Endothelial cell of umbilical vein (primary cell): ENCODE measurements at regions of chr3 and their contacts with region 1.

Region 1: GRCh38 chr3:194592798-194593752 is 40.1 kb downstream of the TMEM44 start:
- DNase-seq: peak; percentile 62
- H3K4me3 ChIP-seq: no peak overlapping the region
- H3K27ac ChIP-seq: peak overlapping the region; percentile 54
- H3K4me1 ChIP-seq: peaks cover 12% of the 10 kb centered on the region
- H3K27me3 ChIP-seq: no peaks in the 10 kb centered on the region
- CTCF ChIP-seq: no peak
- POLR2A ChIP-seq: no peak

Region 2: DNA sequence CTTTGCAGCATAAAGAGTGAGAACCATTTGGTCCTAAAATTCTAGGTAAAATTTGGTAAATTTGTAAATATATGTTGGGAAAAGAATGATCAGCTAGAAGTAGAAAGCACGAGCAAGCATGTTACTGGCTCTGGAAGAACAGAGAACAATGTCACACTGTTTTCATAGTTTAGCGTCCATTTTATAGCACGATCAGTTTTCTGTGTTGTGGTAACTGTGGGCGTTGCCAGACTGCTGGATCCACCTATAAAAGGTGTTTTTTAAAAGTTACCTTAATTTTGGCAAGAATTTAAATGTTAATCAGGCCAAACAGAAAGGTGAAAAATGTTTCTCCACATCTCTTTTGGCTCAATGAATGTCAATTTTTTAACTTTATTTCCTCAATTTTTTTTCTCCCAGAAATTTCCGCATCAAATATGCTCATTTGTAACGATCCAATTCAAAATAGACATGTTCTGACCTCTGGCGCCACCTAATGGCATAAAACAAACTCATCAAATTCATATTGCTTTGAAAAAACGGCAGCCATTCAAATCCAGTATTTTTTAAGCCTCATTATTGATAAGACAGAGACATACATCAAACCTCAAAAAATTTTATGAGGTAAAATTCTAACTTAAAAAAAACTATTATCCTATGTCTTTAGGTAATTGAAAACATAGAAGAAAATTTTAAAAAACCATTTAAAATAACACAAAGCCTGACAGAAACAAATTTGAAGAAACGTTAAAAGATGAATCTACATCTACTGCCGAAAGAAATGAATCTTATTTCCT is 188.5 kb before region 1 on chr3:
- CTCF ChIA-PET with region 1: interaction called, 11 read pairs
- POLR2A ChIA-PET with region 1: no interaction called
- dilution Hi-C with region 1: no loop called
- intact Hi-C with region 1: loop called (anchors 5 kb)
- DNase-seq: peak; percentile 69
- H3K4me3 ChIP-seq: no peak overlapping the region
- H3K27ac ChIP-seq: no peak overlapping the region
- H3K4me1 ChIP-seq: no peaks in the 10 kb centered on the region
- H3K27me3 ChIP-seq: peaks cover 0 to 1% of the 10 kb centered on the region in 2 experiments
- CTCF ChIP-seq: peak; percentile 36 to 49
- POLR2A ChIP-seq: no peak

Region 3: GRCh38 chr3:194465920-194466570 is 127.0 kb before region 1 on chr3:
- CTCF ChIA-PET with region 1: interaction called, 210 read pairs
- POLR2A ChIA-PET with region 1: no interaction called
- dilution Hi-C with region 1: no loop called
- intact Hi-C with region 1: no loop called
- DNase-seq: peak; percentile 35
- H3K4me3 ChIP-seq: peak overlapping the region in 1 of 3 experiments; percentile 5
- H3K27ac ChIP-seq: no peak overlapping the region
- H3K4me1 ChIP-seq: peaks cover 8% of the 10 kb centered on the region
- H3K27me3 ChIP-seq: no peaks in the 10 kb centered on the region
- CTCF ChIP-seq: no peak
- POLR2A ChIP-seq: no peak

Region 4: GRCh38 chr3:194472290-194472920 is 120.7 kb before region 1 on chr3:
- CTCF ChIA-PET with region 1: interaction called, 210 read pairs
- POLR2A ChIA-PET with region 1: interaction called, 3 read pairs
- dilution Hi-C with region 1: no loop called
- intact Hi-C with region 1: loop called (anchors 1 kb)
- DNase-seq: peak; percentile 67
- H3K4me3 ChIP-seq: no peak overlapping the region
- H3K27ac ChIP-seq: no peak overlapping the region
- H3K4me1 ChIP-seq: peaks cover 3% of the 10 kb centered on the region
- H3K27me3 ChIP-seq: no peaks in the 10 kb centered on the region
- CTCF ChIP-seq: peak; percentile 80 to 85
- POLR2A ChIP-seq: no peak

Region 5: DNA sequence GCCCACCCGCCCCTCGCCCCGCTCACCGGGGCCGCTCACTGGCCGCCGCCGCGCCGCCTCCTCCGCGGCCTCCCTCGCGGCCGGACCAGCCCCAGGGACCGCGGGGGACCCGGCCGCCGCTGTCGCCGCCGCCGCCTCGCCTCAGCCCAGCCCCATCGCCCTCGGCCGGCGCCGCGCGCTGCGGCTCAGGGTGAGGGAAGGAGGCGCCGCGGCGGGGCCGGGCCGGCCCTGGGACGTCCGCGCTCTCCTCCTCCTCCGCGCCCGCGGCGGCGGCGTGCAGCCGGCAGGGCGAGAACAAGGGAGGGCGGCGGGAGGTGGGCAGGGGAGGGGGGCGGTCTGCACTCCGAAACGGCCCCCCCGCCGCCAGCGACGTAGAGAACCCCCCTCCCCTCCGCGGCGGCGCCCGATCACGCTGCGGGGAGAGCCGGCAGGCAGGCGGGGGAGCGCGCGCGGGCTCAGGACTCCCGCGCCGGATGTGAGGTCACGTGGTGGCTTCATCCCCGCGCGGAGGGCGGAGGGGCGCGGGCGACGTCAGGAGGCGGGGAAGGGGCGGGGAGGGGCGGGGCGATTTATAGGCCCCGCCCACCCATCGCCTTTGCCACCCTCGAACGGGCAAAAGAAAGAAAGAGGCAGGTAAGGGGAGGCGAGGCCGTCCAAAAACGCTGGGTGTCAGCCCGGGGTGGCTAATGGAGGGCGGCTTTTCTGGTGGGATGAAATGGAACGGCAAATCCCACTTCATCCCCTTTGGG is 106.4 kb before region 1 on chr3 and contains the start of gene ATP13A3:
- CTCF ChIA-PET with region 1: interaction called, 16 read pairs
- POLR2A ChIA-PET with region 1: no interaction called
- dilution Hi-C with region 1: no loop called
- intact Hi-C with region 1: no loop called
- DNase-seq: peak; percentile 87
- H3K4me3 ChIP-seq: peak within 1 kb of the TSS; percentile 14 to 81 (median 72)
- H3K27ac ChIP-seq: peak within 1 kb of the TSS; percentile 62
- H3K4me1 ChIP-seq: peaks cover 28% of the 10 kb centered on the region
- H3K27me3 ChIP-seq: no peaks in the 10 kb centered on the region
- CTCF ChIP-seq: no peak
- POLR2A ChIP-seq: peak; percentile 81
- total RNA-seq, gene ATP13A3: 56.8 and 59.0 TPM in 2 replicates

Region 6: GRCh38 chr3:194573691-194574437 is 19.2 kb before region 1 on chr3:
- CTCF ChIA-PET with region 1: interaction called, 29 read pairs
- POLR2A ChIA-PET with region 1: no interaction called
- dilution Hi-C with region 1: no loop called
- intact Hi-C with region 1: no loop called
- DNase-seq: peak; percentile 54
- H3K4me3 ChIP-seq: no peak overlapping the region
- H3K27ac ChIP-seq: no peak overlapping the region
- H3K4me1 ChIP-seq: peaks cover 20% of the 10 kb centered on the region
- H3K27me3 ChIP-seq: no peaks in the 10 kb centered on the region
- CTCF ChIP-seq: peak; percentile 55 to 76
- POLR2A ChIP-seq: no peak

Region 7: GRCh38 chr3:194604834-194605233 is 11.8 kb after region 1 on chr3:
- CTCF ChIA-PET with region 1: interaction called, 20 read pairs
- POLR2A ChIA-PET with region 1: no interaction called
- dilution Hi-C with region 1: no loop called
- intact Hi-C with region 1: no loop called
- DNase-seq: no peak
- H3K4me3 ChIP-seq: no peak overlapping the region
- H3K27ac ChIP-seq: no peak overlapping the region
- H3K4me1 ChIP-seq: no peaks in the 10 kb centered on the region
- H3K27me3 ChIP-seq: no peaks in the 10 kb centered on the region
- CTCF ChIP-seq: peak; percentile 29 to 44
- POLR2A ChIP-seq: no peak

Region 8: DNA sequence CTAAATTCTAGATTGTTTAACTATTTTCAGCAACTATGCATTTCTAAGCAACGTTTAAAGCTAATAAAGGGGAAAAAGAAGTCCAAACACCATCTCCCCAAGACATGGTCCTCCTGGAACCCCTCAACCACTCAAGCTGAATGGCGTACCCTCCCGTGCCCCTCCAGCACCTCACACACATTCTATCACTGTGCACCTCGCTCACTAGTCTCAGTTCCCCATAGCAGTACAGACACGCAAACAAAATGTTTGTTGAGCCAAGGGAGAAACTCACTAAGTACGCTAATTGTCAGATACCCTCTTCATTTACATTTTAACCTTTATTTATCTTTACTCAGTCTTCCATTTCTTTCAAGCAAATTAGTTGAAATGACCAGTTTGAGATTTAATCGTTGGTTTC is 800.9 kb after region 1 on chr3:
- CTCF ChIA-PET with region 1: no interaction called
- POLR2A ChIA-PET with region 1: no interaction called
- dilution Hi-C with region 1: no loop called
- intact Hi-C with region 1: no loop called
- DNase-seq: no peak
- H3K4me3 ChIP-seq: no peak overlapping the region
- H3K27ac ChIP-seq: no peak overlapping the region
- H3K4me1 ChIP-seq: no peaks in the 10 kb centered on the region
- H3K27me3 ChIP-seq: no peaks in the 10 kb centered on the region
- CTCF ChIP-seq: no peak
- POLR2A ChIP-seq: no peak